Sigmoid colon (tissue), 7 donors: ENCODE measurements at regions of chr17 and their contacts with region 1.

Region 1: GRCh38 chr17:57033295-57033694 is 51.8 kb upstream of the AKAP1 start:
- DNase-seq: no peak
- H3K4me3 ChIP-seq: no peak overlapping the region
- H3K27ac ChIP-seq: peak overlapping the region; percentile 81 to 87 (median 84)
- H3K4me1 ChIP-seq: peaks cover 0 to 61% (median 32%) of the 10 kb centered on the region in 4 donors
- H3K27me3 ChIP-seq: no peaks in the 10 kb centered on the region
- CTCF ChIP-seq: no peak
- EP300 ChIP-seq: no peak
- POLR2A ChIP-seq: no peak

Region 2: GRCh38 chr17:56926701-56927590 is 106.3 kb before region 1 on chr17:
- intact Hi-C with region 1: no loop called
- DNase-seq: no peak
- H3K4me3 ChIP-seq: no peak overlapping the region
- H3K27ac ChIP-seq: no peak overlapping the region
- H3K4me1 ChIP-seq: no peaks in the 10 kb centered on the region
- H3K27me3 ChIP-seq: no peaks in the 10 kb centered on the region
- CTCF ChIP-seq: no peak
- EP300 ChIP-seq: no peak
- POLR2A ChIP-seq: no peak

Region 3: GRCh38 chr17:57084802-57085447 is 51.6 kb after region 1 on chr17 and contains the start of gene AKAP1:
- intact Hi-C with region 1: loop called (anchors 5 kb)
- DNase-seq: peak; percentile 98
- H3K4me3 ChIP-seq: peak within 1 kb of the TSS; percentile 58 to 90 (median 82)
- H3K27ac ChIP-seq: peak within 1 kb of the TSS; percentile 88 to 98 (median 96)
- H3K4me1 ChIP-seq: peaks cover 0 to 46% (median 40%) of the 10 kb centered on the region in 4 donors
- H3K27me3 ChIP-seq: no peaks in the 10 kb centered on the region
- CTCF ChIP-seq: no peak
- EP300 ChIP-seq: no peak
- POLR2A ChIP-seq: peak; percentile 96 to 98
- total RNA-seq, gene AKAP1: 78.9 to 126 (median 108) TPM